PC-3 (cell line): ENCODE measurements at regions of chr3 and their contacts with region 1.

Region 1: DNA sequence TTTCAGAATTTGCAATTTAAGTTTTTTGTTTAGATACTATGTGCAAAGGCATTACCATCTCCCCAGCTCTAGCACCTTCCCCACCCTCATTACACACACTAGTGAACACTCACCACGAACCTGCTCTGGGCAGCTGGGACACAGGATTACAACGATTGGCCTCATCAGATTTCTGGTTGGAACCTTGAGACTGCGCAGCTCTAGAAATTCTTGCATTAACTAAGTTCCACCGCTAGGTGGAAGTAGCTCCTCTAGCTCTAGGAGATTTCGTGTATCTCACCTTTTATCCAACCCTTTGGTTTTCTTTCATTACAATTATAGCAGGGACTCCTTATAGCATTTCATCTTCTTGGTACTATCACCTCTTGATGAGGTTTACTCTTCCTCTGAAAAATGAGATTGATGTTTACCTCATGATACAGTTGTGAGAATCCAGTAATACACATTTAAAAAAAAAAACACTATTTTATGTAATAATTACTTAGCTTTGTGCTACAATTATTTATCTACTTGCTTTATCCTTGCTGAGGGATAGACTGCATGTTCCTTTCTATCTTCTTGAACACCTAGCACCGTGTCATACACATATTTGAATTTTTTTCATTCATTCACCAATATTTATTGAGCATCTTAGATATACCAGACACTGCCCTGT is 28.7 kb upstream of the PLOD2 start:
- DNase-seq: peak; percentile 90
- ATAC-seq: peak; percentile 79
- H3K4me3 ChIP-seq: peak overlapping the region; percentile 36; the same call in 1 of the 2 replicates
- H3K27ac ChIP-seq: no peak overlapping the region
- H3K4me1 ChIP-seq: peaks cover 20% of the 10 kb centered on the region
- H3K27me3 ChIP-seq: no peaks in the 10 kb centered on the region
- CTCF ChIP-seq: peak; percentile 90

Region 2: GRCh38 chr3:145776782-145777408 is 412.8 kb before region 1 on chr3:
- CTCF ChIA-PET with region 1: interaction called, 5 read pairs
- POLR2A ChIA-PET with region 1: no interaction called
- intact Hi-C with region 1: loop called (anchors 1 kb)
- DNase-seq: peak; percentile 67
- ATAC-seq: peak; percentile 35; the same call in 1 of the 2 replicates
- H3K4me3 ChIP-seq: no peak overlapping the region
- H3K27ac ChIP-seq: no peak overlapping the region
- H3K4me1 ChIP-seq: no peaks in the 10 kb centered on the region
- H3K27me3 ChIP-seq: no peaks in the 10 kb centered on the region
- CTCF ChIP-seq: peak; percentile 72

Region 3: GRCh38 chr3:146125951-146126350 is 63.7 kb before region 1 on chr3:
- CTCF ChIA-PET with region 1: interaction called, 12 read pairs
- POLR2A ChIA-PET with region 1: no interaction called
- intact Hi-C with region 1: no loop called
- DNase-seq: peak; percentile 75
- ATAC-seq: peak; percentile 71
- H3K4me3 ChIP-seq: no peak overlapping the region
- H3K27ac ChIP-seq: no peak overlapping the region
- H3K4me1 ChIP-seq: peaks cover 13% of the 10 kb centered on the region
- H3K27me3 ChIP-seq: no peaks in the 10 kb centered on the region
- CTCF ChIP-seq: no peak

Region 4: GRCh38 chr3:146218880-146219866 is 29.5 kb after region 1 on chr3:
- CTCF ChIA-PET with region 1: interaction called, 3 read pairs
- POLR2A ChIA-PET with region 1: no interaction called
- intact Hi-C with region 1: loop called (anchors 1 kb)
- DNase-seq: peak; percentile 70
- ATAC-seq: peak; percentile 15; the same call in 1 of the 2 replicates
- H3K4me3 ChIP-seq: no peak overlapping the region
- H3K27ac ChIP-seq: no peak overlapping the region
- H3K4me1 ChIP-seq: peaks cover 38% of the 10 kb centered on the region
- H3K27me3 ChIP-seq: no peaks in the 10 kb centered on the region
- CTCF ChIP-seq: peak; percentile 90

Region 5: GRCh38 chr3:146382386-146382785 is 192.7 kb after region 1 on chr3:
- CTCF ChIA-PET with region 1: no interaction called
- POLR2A ChIA-PET with region 1: no interaction called
- intact Hi-C with region 1: loop called (anchors 1 kb)
- DNase-seq: peak; percentile 61
- ATAC-seq: peak; percentile 93
- H3K4me3 ChIP-seq: no peak overlapping the region
- H3K27ac ChIP-seq: no peak overlapping the region
- H3K4me1 ChIP-seq: no peaks in the 10 kb centered on the region
- H3K27me3 ChIP-seq: no peaks in the 10 kb centered on the region
- CTCF ChIP-seq: peak; percentile 58